Activated naive CD4-positive, alpha-beta T cell treated with anti-CD3 and anti-CD28 coated beads for 36 hours (primary cell): ENCODE measurements at regions of chr15 and their contacts with region 1.

Region 1: GRCh38 chr15:80695104-80695910 is at the start of gene ABHD17C:
- DNase-seq: peak; percentile 45
- H3K4me3 Mint-ChIP-seq: peak within 1 kb of the TSS; percentile 93
- H3K27ac Mint-ChIP-seq: peak within 1 kb of the TSS; percentile 12
- H3K4me1 Mint-ChIP-seq: peaks cover 15% of the 10 kb centered on the region
- H3K27me3 Mint-ChIP-seq: peaks cover 3% of the 10 kb centered on the region
- total RNA-seq, gene ABHD17C: 6.5 to 7.3 TPM

Region 2: GRCh38 chr15:79310983-79311900 is 1384.1 kb before region 1 on chr15 and contains the start of gene TMED3:
- CTCF ChIA-PET with region 1: no interaction called
- intact Hi-C with region 1: loop called (anchors 10 kb)
- DNase-seq: peak; percentile 85
- H3K4me3 Mint-ChIP-seq: peak within 1 kb of the TSS; percentile 85
- H3K27ac Mint-ChIP-seq: no peak within 1 kb of the TSS
- H3K4me1 Mint-ChIP-seq: peaks cover 35% of the 10 kb centered on the region
- H3K27me3 Mint-ChIP-seq: peaks cover 14% of the 10 kb centered on the region
- total RNA-seq, gene TMED3: 37.6 to 37.9 TPM

Region 3: GRCh38 chr15:80567721-80568157 is 127.6 kb before region 1 on chr15:
- CTCF ChIA-PET with region 1: no interaction called
- intact Hi-C with region 1: loop called (anchors 10 kb)
- DNase-seq: peak; percentile 46
- H3K4me3 Mint-ChIP-seq: no peak overlapping the region
- H3K27ac Mint-ChIP-seq: no peak overlapping the region
- H3K4me1 Mint-ChIP-seq: no peaks in the 10 kb centered on the region
- H3K27me3 Mint-ChIP-seq: peaks cover 12% of the 10 kb centered on the region

Region 4: DNA sequence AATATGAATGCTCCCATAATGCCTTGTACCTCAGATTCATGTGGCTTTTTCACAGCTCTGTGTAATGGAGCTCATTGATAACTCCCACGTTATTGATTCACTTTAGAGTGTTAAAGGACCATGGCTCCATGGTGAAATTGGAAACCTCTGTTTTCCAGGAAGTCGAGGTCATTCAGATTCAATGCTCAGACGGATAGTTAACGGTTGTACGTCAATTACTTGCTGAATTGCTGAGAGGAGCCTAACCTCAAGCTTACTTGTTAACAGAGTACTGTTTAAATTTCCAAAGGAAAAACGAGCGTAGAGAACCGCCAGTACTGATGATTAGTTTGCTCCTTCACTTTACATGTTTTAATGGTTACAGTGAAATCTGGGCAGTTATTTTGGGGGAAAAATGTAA is 10.9 kb after region 1 on chr15:
- CTCF ChIA-PET with region 1: interaction called, 10 read pairs
- intact Hi-C with region 1: no loop called
- DNase-seq: no peak
- H3K4me3 Mint-ChIP-seq: no peak overlapping the region
- H3K27ac Mint-ChIP-seq: no peak overlapping the region
- H3K4me1 Mint-ChIP-seq: peaks cover 5% of the 10 kb centered on the region
- H3K27me3 Mint-ChIP-seq: no peaks in the 10 kb centered on the region

Region 5: GRCh38 chr15:80934761-80935221 is 239.5 kb after region 1 on chr15:
- CTCF ChIA-PET with region 1: no interaction called
- intact Hi-C with region 1: no loop called
- DNase-seq: no peak
- H3K4me3 Mint-ChIP-seq: no peak overlapping the region
- H3K27ac Mint-ChIP-seq: no peak overlapping the region
- H3K4me1 Mint-ChIP-seq: no peaks in the 10 kb centered on the region
- H3K27me3 Mint-ChIP-seq: no peaks in the 10 kb centered on the region